ENCODE measurements at regions of chr13 and their contacts with region 1.

Region 1: GRCh38 chr13:40682449-40683240 is 16.2 kb upstream of the FOXO1 start:
- DNase-seq: no peak
- H3K4me3 ChIP-seq: peak overlapping the region in 1 of 2 experiments; percentile 17; a peak in 1 of 4 replicates
- H3K27ac ChIP-seq: no peak overlapping the region
- H3K4me1 ChIP-seq: peaks cover 0 to 12% of the 10 kb centered on the region in 2 experiments; a peak in 1 of 4 replicates
- H3K27me3 ChIP-seq: no peaks in the 10 kb centered on the region
- CTCF ChIP-seq: peak; percentile 76
- EP300 ChIP-seq: no peak
- RAD21 ChIP-seq: peak; percentile 65

Region 2: DNA sequence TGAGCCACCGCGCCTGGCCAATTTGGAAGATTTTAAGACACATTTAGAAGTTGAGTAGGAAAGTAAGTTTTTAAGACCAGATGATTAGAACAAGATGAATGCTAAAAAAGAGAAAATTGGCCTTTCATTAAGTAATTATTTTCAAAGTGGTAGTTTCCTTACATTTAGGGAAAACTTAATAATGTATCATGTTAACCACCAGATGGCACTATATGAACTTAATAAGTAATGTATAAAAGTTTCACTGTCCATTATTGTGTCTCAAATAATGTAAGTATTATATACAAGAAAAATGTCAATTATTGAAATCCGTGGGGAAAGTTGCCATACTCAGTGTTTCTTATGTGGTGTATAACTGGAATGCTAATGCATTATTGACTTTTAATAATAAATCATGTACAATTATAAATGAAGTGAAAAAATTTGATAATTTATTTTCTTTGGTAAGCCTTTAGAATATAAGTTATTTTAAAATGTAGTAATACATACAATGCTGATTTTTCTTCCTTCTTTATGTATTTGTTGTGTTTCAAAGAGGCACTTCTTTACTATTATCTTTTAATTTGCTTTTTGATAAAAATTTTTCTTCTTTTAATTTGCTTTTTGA is 998.0 kb before region 1 on chr13:
- CTCF ChIA-PET with region 1: interaction called, 20 read pairs
- POLR2A ChIA-PET with region 1: no interaction called
- DNase-seq: peak; percentile 23
- H3K4me3 ChIP-seq: no peak overlapping the region
- H3K27ac ChIP-seq: no peak overlapping the region
- H3K4me1 ChIP-seq: no peaks in the 10 kb centered on the region; a peak in 1 of 4 replicates
- H3K27me3 ChIP-seq: no peaks in the 10 kb centered on the region
- CTCF ChIP-seq: peak; percentile 67
- EP300 ChIP-seq: no peak
- RAD21 ChIP-seq: peak; percentile 52

Region 3: DNA sequence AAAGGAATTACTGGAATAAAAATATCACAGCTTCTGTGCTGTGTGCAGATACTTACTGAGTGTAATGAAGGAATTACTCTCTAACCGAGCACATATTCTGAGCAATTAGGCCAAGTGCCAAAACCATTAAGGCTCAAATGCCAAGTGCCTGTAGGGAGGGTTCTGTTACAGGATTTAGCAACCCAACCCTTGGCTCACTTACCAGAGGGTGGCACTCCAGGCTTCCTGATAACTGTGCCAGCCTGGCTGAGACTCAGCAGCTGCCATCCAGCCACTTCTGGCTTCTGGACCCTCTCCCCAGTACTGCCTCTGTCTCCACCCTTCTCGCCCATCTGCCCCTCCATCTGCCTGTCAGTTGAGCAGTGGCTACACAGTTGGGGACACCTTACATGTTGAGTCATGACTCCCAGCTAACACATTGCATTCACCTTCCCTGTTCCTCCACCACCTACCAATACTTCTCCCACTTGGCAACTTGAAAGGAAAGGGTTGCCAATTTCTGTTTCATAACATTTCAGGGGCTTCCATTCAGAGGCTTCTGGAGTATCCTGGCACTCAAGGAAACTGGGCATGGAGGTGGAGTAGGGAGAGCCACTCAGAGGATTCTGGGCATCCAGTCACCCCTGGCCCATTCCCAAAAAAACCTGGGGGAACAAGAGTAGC is 916.7 kb before region 1 on chr13:
- CTCF ChIA-PET with region 1: interaction called, 18 read pairs
- POLR2A ChIA-PET with region 1: no interaction called
- DNase-seq: peak; percentile 42
- H3K4me3 ChIP-seq: no peak overlapping the region
- H3K27ac ChIP-seq: no peak overlapping the region
- H3K4me1 ChIP-seq: peaks cover 0 to 12% of the 10 kb centered on the region in 2 experiments; a peak in 3 of 4 replicates
- H3K27me3 ChIP-seq: no peaks in the 10 kb centered on the region
- CTCF ChIP-seq: peak; percentile 51
- EP300 ChIP-seq: no peak
- RAD21 ChIP-seq: peak; percentile 79

Region 4: DNA sequence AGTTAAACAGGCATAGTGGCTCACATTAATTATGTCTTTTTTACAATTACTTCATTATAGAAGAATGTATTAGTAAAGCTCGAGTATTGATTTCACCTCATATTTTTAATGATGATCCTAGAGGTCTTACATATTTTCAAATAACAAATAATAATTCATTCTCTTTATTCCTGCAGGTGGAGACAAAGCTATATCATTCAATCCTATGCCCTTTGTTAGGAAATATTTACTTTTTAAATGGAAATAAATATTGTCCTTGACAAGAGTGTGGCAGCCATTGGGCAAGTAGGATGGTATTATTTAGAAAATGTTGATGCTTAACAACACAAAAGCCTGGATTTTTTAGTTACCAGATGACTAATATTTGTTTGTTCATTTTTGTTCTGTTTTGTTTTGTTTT is 899.6 kb before region 1 on chr13:
- CTCF ChIA-PET with region 1: interaction called, 19 read pairs
- POLR2A ChIA-PET with region 1: no interaction called
- DNase-seq: no peak
- H3K4me3 ChIP-seq: no peak overlapping the region
- H3K27ac ChIP-seq: no peak overlapping the region
- H3K4me1 ChIP-seq: peaks cover 4 to 20% of the 10 kb centered on the region in 2 experiments; a peak in 3 of 4 replicates
- H3K27me3 ChIP-seq: no peaks in the 10 kb centered on the region
- CTCF ChIP-seq: peak; percentile 55
- EP300 ChIP-seq: no peak
- RAD21 ChIP-seq: peak; percentile 61

Region 5: GRCh38 chr13:39942552-39943273 is 739.9 kb before region 1 on chr13:
- CTCF ChIA-PET with region 1: interaction called, 30 read pairs
- POLR2A ChIA-PET with region 1: no interaction called
- DNase-seq: peak; percentile 63
- H3K4me3 ChIP-seq: peak overlapping the region in 1 of 2 experiments; percentile 33; a peak in 1 of 4 replicates
- H3K27ac ChIP-seq: no peak overlapping the region
- H3K4me1 ChIP-seq: no peaks in the 10 kb centered on the region; a peak in 1 of 4 replicates
- H3K27me3 ChIP-seq: no peaks in the 10 kb centered on the region
- CTCF ChIP-seq: peak; percentile 85
- EP300 ChIP-seq: no peak
- RAD21 ChIP-seq: peak; percentile 81

Region 6: DNA sequence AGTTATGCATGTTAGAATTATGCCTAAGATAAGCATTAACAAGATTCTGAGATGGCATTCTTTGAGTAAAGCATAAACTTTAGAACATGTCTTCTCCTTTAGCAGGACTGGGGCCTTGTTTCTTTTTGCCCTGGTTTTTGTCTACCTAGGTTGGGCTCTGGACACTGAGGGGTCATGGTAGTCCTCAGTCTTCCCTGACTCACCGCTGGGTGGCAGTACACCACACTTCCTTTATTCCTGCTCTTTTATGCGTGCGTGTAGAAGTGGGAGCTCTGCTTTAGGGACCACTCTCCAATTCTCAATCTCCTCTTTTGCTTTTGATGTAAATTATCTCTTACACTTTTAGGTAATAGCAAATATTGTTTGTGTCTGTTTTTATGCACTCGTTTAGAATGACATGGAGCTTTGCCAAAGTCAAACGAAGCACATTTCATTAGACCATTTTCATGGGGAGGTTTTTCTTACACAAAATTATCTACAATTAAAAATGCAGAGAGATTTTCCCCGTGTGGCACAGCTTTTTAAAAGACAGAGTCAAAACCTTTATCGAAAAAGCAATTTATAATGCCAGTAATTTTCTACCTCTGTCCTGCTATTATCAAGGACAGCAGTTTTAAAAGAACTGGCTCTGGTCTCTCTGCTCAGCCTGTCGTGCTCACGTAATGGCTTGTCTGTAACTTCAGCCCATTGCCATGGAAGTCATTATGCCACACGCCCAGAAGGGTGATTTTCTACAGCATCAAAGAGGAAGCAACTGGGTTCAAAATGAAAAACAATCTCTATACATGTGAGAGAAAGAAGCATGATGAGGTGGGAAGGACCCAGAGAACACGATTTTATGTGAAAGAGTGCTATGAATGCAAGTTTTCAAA is 613.2 kb before region 1 on chr13:
- CTCF ChIA-PET with region 1: interaction called, 42 read pairs
- POLR2A ChIA-PET with region 1: no interaction called
- DNase-seq: peak; percentile 64
- H3K4me3 ChIP-seq: no peak overlapping the region
- H3K27ac ChIP-seq: no peak overlapping the region
- H3K4me1 ChIP-seq: peaks cover 1 to 8% of the 10 kb centered on the region in 2 experiments
- H3K27me3 ChIP-seq: no peaks in the 10 kb centered on the region
- CTCF ChIP-seq: peak; percentile 79
- EP300 ChIP-seq: no peak
- RAD21 ChIP-seq: peak; percentile 85

Region 7: DNA sequence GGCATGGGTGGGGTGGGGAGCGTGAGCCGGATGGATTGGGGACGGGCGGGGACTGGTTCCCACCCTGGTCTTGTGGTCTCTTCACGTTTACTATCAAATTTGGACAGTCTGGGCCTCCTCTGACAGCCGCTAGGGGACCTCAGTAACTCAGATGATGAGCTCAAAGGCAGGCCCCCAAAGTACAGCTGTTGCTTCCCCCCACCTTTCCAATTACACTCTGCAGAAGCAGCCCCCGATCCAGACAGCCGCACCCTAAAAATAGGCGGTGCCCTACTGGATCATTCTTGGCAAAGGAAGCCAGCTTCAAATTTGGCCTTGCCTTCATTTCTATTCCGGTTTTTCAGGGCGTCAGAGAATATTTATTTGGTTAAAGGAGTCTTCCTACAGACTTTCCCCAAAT is 14.3 kb before region 1 on chr13:
- CTCF ChIA-PET with region 1: interaction called, 16 read pairs
- POLR2A ChIA-PET with region 1: no interaction called
- DNase-seq: no peak
- H3K4me3 ChIP-seq: no peak overlapping the region
- H3K27ac ChIP-seq: no peak overlapping the region
- H3K4me1 ChIP-seq: peaks cover under 1 to 10% of the 10 kb centered on the region in 2 experiments; a peak in 3 of 4 replicates
- H3K27me3 ChIP-seq: no peaks in the 10 kb centered on the region
- CTCF ChIP-seq: no peak
- EP300 ChIP-seq: no peak
- RAD21 ChIP-seq: no peak

Measured in SK-N-SH (cell line).